Mammary epithelial cell (primary cell): ENCODE measurements at regions of chr11 and their contacts with region 1.

Region 1: GRCh38 chr11:74255741-74256369 is 55.6 kb downstream of the P4HA3 start:
- DNase-seq: peak; percentile 50
- H3K4me3 ChIP-seq: no peak overlapping the region
- H3K27ac ChIP-seq: no peak overlapping the region
- H3K4me1 ChIP-seq: no peaks in the 10 kb centered on the region
- H3K27me3 ChIP-seq: no peaks in the 10 kb centered on the region
- CTCF ChIP-seq: peak; percentile 91 to 92

Region 2: GRCh38 chr11:74321487-74322188 is 65.8 kb after region 1 on chr11:
- CTCF ChIA-PET with region 1: interaction called, 5 read pairs
- dilution Hi-C with region 1: no loop called
- in situ Hi-C with region 1: no loop called
- intact Hi-C with region 1: loop called (anchors 1 kb)
- DNase-seq: peak; percentile 8
- H3K4me3 ChIP-seq: no peak overlapping the region
- H3K27ac ChIP-seq: no peak overlapping the region
- H3K4me1 ChIP-seq: peaks cover 17% of the 10 kb centered on the region
- H3K27me3 ChIP-seq: no peaks in the 10 kb centered on the region
- CTCF ChIP-seq: peak; percentile 75 to 78

Region 3: DNA sequence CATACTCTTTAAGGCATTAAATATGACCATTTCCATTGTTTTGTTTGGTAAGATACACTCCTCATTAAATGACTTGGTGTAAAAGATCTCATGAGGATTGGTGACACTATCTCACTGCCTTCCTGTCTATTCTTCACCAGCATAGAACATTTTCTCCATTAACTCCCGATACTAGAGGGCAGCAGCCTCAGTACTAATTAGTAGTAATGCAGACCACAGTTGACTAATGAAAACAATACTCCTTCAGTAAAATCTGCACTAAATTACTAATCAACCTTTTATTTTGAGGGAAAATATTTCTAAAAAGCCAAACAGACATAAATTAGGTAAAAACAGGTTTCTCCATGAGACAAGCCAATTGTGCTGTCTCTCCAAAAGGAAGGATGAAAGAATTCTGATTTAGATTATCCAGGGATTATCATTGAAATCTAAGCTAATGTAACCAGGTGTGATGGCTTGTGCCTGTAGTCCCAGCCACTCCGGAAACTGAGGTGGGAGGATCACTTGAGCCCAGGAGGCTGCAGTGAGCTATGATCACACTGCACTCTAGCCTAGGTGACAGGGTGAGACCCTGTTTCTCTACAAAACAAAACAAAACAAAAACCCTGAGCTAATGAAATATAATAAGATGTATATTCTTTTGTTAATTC is 132.9 kb after region 1 on chr11:
- CTCF ChIA-PET with region 1: no interaction called
- dilution Hi-C with region 1: no loop called
- in situ Hi-C with region 1: no loop called
- intact Hi-C with region 1: loop called (anchors 2 kb)
- DNase-seq: peak; percentile 51
- H3K4me3 ChIP-seq: no peak overlapping the region
- H3K27ac ChIP-seq: no peak overlapping the region
- H3K4me1 ChIP-seq: peaks cover 4% of the 10 kb centered on the region
- H3K27me3 ChIP-seq: no peaks in the 10 kb centered on the region
- CTCF ChIP-seq: peak; percentile 67 to 80

Region 4: GRCh38 chr11:74443071-74443864 is 187.4 kb after region 1 on chr11:
- CTCF ChIA-PET with region 1: no interaction called
- dilution Hi-C with region 1: no loop called
- in situ Hi-C with region 1: loop called in 1 of 2 experiments (anchors 5 kb)
- intact Hi-C with region 1: loop called (anchors 1 kb)
- DNase-seq: peak; percentile 57
- H3K4me3 ChIP-seq: no peak overlapping the region
- H3K27ac ChIP-seq: no peak overlapping the region
- H3K4me1 ChIP-seq: no peaks in the 10 kb centered on the region
- H3K27me3 ChIP-seq: no peaks in the 10 kb centered on the region
- CTCF ChIP-seq: peak; percentile 54 to 64

Region 5: GRCh38 chr11:74449369-74449931 is 193.6 kb after region 1 on chr11:
- CTCF ChIA-PET with region 1: interaction called, 7 read pairs
- dilution Hi-C with region 1: no loop called
- in situ Hi-C with region 1: loop called in 1 of 2 experiments (anchors 5 kb)
- intact Hi-C with region 1: loop called (anchors 1 kb)
- DNase-seq: peak; percentile 60
- H3K4me3 ChIP-seq: no peak overlapping the region
- H3K27ac ChIP-seq: no peak overlapping the region
- H3K4me1 ChIP-seq: no peaks in the 10 kb centered on the region
- H3K27me3 ChIP-seq: no peaks in the 10 kb centered on the region
- CTCF ChIP-seq: peak; percentile 67 to 74

Region 6: DNA sequence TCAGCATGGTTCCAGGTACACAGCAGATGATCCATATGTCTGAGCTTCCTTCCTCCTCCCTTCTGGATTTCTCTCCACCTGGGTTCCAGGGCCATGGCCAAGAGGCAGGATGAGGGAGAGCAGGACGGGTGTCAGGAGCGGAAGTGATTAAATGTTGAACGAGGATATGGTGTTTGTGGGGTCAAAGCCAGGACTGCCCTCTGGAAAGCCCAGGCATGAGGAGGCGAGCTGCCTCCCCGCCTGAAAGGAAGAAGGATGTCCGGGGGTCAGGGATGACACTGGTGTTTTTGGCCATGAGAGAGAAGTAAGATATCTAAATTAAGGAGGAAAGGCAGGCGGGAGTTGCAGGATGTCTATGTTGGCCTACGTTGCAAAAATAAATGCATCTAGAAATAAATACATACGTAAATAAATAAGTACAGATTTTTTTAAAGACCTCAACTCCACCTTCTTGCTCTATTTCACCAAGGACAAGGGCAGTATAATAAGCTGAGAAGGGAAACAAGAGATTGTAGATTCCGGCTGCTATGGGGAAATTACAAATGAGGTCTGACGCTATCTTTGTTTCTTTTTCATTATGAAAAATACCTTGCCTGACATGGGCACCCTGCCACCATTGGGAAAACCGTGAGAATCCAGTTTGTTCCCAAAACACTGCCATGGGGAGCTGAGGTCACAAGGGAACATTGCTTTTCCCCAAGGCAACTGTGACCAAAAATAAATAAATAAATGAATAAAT is 265.2 kb after region 1 on chr11:
- CTCF ChIA-PET with region 1: no interaction called
- dilution Hi-C with region 1: no loop called
- in situ Hi-C with region 1: no loop called
- intact Hi-C with region 1: no loop called
- DNase-seq: no peak
- H3K4me3 ChIP-seq: no peak overlapping the region
- H3K27ac ChIP-seq: no peak overlapping the region
- H3K4me1 ChIP-seq: no peaks in the 10 kb centered on the region
- H3K27me3 ChIP-seq: no peaks in the 10 kb centered on the region
- CTCF ChIP-seq: no peak